Right cardiac atrium (tissue), 5 donors: ENCODE measurements at regions of chr1 and their contacts with region 1.

Region 1: GRCh38 chr1:11645670-11646265 is 8.5 kb downstream of the FBXO2 start:
- DNase-seq: peak; percentile 81 to 92 (median 91)
- ATAC-seq: peak in 1 of 2 donors; percentile 42
- H3K4me3 ChIP-seq: no peak overlapping the region
- H3K27ac ChIP-seq: no peak overlapping the region
- H3K4me1 ChIP-seq: peaks cover 2% of the 10 kb centered on the region
- H3K27me3 ChIP-seq: no peaks in the 10 kb centered on the region

Region 2: DNA sequence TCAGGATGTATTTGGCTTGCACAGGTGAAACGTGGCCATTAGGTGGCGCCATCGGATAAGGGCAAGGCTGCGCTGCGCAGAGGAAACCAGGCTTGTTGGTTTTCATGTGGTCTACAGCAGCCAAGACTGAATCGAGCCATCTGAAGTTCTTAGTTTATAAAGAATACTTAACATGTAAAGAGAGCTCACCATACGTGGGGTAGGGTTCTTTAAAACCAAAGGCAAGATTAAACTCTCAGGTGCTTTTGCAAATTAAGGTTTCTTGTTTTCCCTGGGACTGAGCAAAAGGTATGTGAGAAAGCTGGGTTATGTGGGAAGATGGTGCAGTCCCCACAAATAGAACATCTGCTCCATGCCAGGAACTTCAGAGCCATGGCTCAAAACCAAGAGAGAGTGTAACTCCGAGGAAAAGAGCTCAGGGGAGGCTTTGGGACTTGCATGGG is 608.0 kb before region 1 on chr1:
- intact Hi-C with region 1: loop called (anchors 2 to 10 kb)
- DNase-seq: peak; percentile 86 to 94 (median 93)
- ATAC-seq: peak; percentile 90 to 94
- H3K4me3 ChIP-seq: no peak overlapping the region
- H3K27ac ChIP-seq: no peak overlapping the region
- H3K4me1 ChIP-seq: no peaks in the 10 kb centered on the region
- H3K27me3 ChIP-seq: no peaks in the 10 kb centered on the region

Region 3: GRCh38 chr1:11248155-11248554 is 397.6 kb before region 1 on chr1:
- intact Hi-C with region 1: loop called (anchors 5 to 10 kb)
- DNase-seq: no peak
- ATAC-seq: no peak
- H3K4me3 ChIP-seq: no peak overlapping the region
- H3K27ac ChIP-seq: no peak overlapping the region
- H3K4me1 ChIP-seq: no peaks in the 10 kb centered on the region
- H3K27me3 ChIP-seq: no peaks in the 10 kb centered on the region

Region 4: DNA sequence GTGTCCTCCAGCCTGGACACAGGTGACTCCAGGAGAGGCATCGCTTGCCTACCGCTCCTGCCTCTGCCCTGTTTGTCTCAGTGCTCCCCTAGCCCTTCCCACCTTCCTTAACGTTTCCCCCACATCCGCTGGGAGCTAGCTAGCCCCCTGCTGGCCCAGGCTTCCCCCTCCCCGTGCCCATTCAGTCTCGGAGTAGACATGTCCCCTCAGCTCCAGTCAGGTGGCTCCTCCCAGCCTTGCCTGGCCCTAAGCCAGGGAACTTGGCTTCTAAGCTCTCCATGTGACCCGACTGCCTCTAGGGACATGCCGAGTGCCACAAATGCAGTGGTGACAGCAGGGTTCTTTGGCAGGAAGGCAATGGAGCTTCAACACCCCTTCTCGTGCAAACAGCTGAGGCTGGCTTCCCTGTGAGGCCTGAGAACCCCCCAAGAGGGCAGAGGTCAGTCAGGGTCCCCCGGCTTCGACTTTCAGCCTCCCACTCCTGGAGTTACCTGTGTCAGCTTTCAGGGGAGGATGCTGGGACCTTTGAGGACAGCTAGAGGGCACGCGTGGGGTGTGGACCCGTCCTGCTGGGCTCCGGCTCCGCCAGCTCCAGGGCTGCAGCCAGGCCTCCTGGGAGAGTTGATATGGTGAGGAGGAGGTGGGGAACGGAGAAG is 62.0 kb after region 1 on chr1:
- intact Hi-C with region 1: loop called in 1 of 4 experiments (anchors 10 kb)
- DNase-seq: peak; percentile 72 to 86 (median 85)
- ATAC-seq: peak; percentile 78 to 83
- H3K4me3 ChIP-seq: no peak overlapping the region
- H3K27ac ChIP-seq: no peak overlapping the region
- H3K4me1 ChIP-seq: no peaks in the 10 kb centered on the region
- H3K27me3 ChIP-seq: no peaks in the 10 kb centered on the region

Region 5: GRCh38 chr1:11882814-11883538 is 237.2 kb after region 1 on chr1:
- intact Hi-C with region 1: loop called in 1 of 4 experiments (anchors 10 kb)
- DNase-seq: peak; percentile 88 to 96 (median 94)
- ATAC-seq: peak; percentile 78 to 80
- H3K4me3 ChIP-seq: no peak overlapping the region
- H3K27ac ChIP-seq: peak overlapping the region; percentile 56
- H3K4me1 ChIP-seq: peaks cover 34% of the 10 kb centered on the region
- H3K27me3 ChIP-seq: no peaks in the 10 kb centered on the region